B cell (primary cell): ENCODE measurements at regions of chr9 and their contacts with region 1.

Region 1: GRCh38 chr9:36407122-36407723 is 7.2 kb upstream of the RNF38 start:
- DNase-seq: peak; percentile 83
- ATAC-seq: peak; percentile 86
- H3K4me3 ChIP-seq: no peak overlapping the region
- H3K4me3 Mint-ChIP-seq: no peak overlapping the region
- H3K27ac ChIP-seq: peak overlapping the region in 1 of 2 donors; percentile 35
- H3K27ac Mint-ChIP-seq: peak overlapping the region; percentile 54
- H3K4me1 ChIP-seq: no peaks in the 10 kb centered on the region
- H3K4me1 Mint-ChIP-seq: peaks cover 9% of the 10 kb centered on the region
- H3K27me3 ChIP-seq: no peaks in the 10 kb centered on the region
- H3K27me3 Mint-ChIP-seq: no peaks in the 10 kb centered on the region
- CTCF ChIP-seq: peak; percentile 97

Region 2: GRCh38 chr9:36328798-36329411 is 78.3 kb before region 1 on chr9:
- CTCF ChIA-PET with region 1: no interaction called
- POLR2A ChIA-PET with region 1: no interaction called
- intact Hi-C with region 1: no loop called
- DNase-seq: peak; percentile 76
- ATAC-seq: peak; percentile 31
- H3K4me3 ChIP-seq: no peak overlapping the region
- H3K4me3 Mint-ChIP-seq: no peak overlapping the region
- H3K27ac ChIP-seq: no peak overlapping the region
- H3K27ac Mint-ChIP-seq: no peak overlapping the region
- H3K4me1 ChIP-seq: no peaks in the 10 kb centered on the region
- H3K4me1 Mint-ChIP-seq: peaks cover 2% of the 10 kb centered on the region
- H3K27me3 ChIP-seq: no peaks in the 10 kb centered on the region
- H3K27me3 Mint-ChIP-seq: no peaks in the 10 kb centered on the region
- CTCF ChIP-seq: peak; percentile 85

Region 3: GRCh38 chr9:36423206-36423605 is 16.0 kb after region 1 on chr9:
- CTCF ChIA-PET with region 1: interaction called, 27 read pairs
- POLR2A ChIA-PET with region 1: no interaction called
- intact Hi-C with region 1: no loop called
- DNase-seq: no peak
- ATAC-seq: no peak
- H3K4me3 ChIP-seq: no peak overlapping the region
- H3K4me3 Mint-ChIP-seq: no peak overlapping the region
- H3K27ac ChIP-seq: no peak overlapping the region
- H3K27ac Mint-ChIP-seq: no peak overlapping the region
- H3K4me1 ChIP-seq: no peaks in the 10 kb centered on the region
- H3K4me1 Mint-ChIP-seq: peaks cover 2% of the 10 kb centered on the region
- H3K27me3 ChIP-seq: no peaks in the 10 kb centered on the region
- H3K27me3 Mint-ChIP-seq: no peaks in the 10 kb centered on the region
- CTCF ChIP-seq: no peak

Region 4: GRCh38 chr9:36450110-36450732 is 43.0 kb after region 1 on chr9:
- CTCF ChIA-PET with region 1: interaction called, 28 read pairs
- POLR2A ChIA-PET with region 1: no interaction called
- intact Hi-C with region 1: loop called (anchors 1 kb)
- DNase-seq: peak; percentile 40
- ATAC-seq: no peak
- H3K4me3 ChIP-seq: no peak overlapping the region
- H3K4me3 Mint-ChIP-seq: no peak overlapping the region
- H3K27ac ChIP-seq: no peak overlapping the region
- H3K27ac Mint-ChIP-seq: no peak overlapping the region
- H3K4me1 ChIP-seq: no peaks in the 10 kb centered on the region
- H3K4me1 Mint-ChIP-seq: peaks cover 8% of the 10 kb centered on the region
- H3K27me3 ChIP-seq: no peaks in the 10 kb centered on the region
- H3K27me3 Mint-ChIP-seq: no peaks in the 10 kb centered on the region
- CTCF ChIP-seq: peak; percentile 75

Region 5: GRCh38 chr9:36470643-36471290 is 63.5 kb after region 1 on chr9:
- CTCF ChIA-PET with region 1: interaction called, 7 read pairs
- POLR2A ChIA-PET with region 1: no interaction called
- intact Hi-C with region 1: loop called (anchors 5 kb)
- DNase-seq: peak; percentile 79
- ATAC-seq: peak; percentile 96
- H3K4me3 ChIP-seq: peak overlapping the region; percentile 30 to 63 (median 48)
- H3K4me3 Mint-ChIP-seq: peak overlapping the region; percentile 83
- H3K27ac ChIP-seq: peak overlapping the region; percentile 85 to 95
- H3K27ac Mint-ChIP-seq: peak overlapping the region; percentile 87
- H3K4me1 ChIP-seq: peaks cover 19 to 24% of the 10 kb centered on the region in 2 donors
- H3K4me1 Mint-ChIP-seq: peaks cover 35% of the 10 kb centered on the region
- H3K27me3 ChIP-seq: no peaks in the 10 kb centered on the region
- H3K27me3 Mint-ChIP-seq: no peaks in the 10 kb centered on the region
- CTCF ChIP-seq: no peak

Region 6: DNA sequence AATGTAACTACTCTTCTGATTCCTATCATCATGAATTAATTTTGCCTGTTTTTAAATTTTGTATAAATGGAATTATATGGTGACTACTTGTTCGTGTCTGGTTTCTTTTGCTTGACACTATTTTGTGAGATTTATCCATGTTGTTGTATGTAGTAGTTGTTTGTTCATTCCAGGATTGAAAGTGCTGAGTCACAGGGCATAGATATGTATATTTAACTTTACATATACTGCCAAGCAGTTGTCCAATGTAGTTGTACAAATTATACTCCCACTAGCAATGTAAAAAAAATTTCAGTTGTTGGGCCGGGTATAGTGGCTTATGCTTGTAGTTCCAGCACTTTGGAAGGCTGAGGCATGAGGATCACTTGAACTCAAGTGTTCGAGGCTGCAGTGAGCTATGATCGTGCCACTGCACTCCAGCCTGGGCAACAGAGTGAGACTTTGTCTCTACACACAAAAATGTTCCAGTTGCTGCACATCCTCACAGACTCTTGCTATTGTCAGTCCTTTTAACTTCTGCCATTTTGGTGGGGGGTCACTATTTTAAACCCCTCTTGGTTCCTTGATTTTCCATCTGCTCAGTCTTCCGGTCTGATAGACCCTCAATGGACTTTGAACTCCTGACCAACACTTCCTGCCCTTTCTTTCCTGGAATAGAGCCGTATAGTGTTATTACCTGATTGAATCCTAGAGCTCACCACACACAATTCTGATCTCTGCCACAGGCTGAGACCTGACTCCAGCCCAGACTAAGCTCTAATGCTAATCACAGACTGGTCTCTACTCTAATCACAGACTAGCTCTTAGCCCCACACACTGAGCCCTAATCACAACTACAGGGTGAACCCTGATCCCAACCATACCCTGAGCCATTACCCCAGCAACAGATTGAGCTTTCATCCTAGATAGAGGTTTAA is 96.2 kb after region 1 on chr9:
- CTCF ChIA-PET with region 1: interaction called, 10 read pairs
- POLR2A ChIA-PET with region 1: no interaction called
- intact Hi-C with region 1: no loop called
- DNase-seq: no peak
- ATAC-seq: no peak
- H3K4me3 ChIP-seq: no peak overlapping the region
- H3K4me3 Mint-ChIP-seq: no peak overlapping the region
- H3K27ac ChIP-seq: no peak overlapping the region
- H3K27ac Mint-ChIP-seq: no peak overlapping the region
- H3K4me1 ChIP-seq: peaks cover 3 to 8% of the 10 kb centered on the region in 2 donors
- H3K4me1 Mint-ChIP-seq: peaks cover 24% of the 10 kb centered on the region
- H3K27me3 ChIP-seq: peaks cover 0 to 3% (median 0%) of the 10 kb centered on the region in 4 experiments
- H3K27me3 Mint-ChIP-seq: peaks cover 8% of the 10 kb centered on the region
- CTCF ChIP-seq: no peak

Region 7: GRCh38 chr9:36632892-36633291 is 225.7 kb after region 1 on chr9:
- CTCF ChIA-PET with region 1: interaction called, 3 read pairs
- POLR2A ChIA-PET with region 1: no interaction called
- intact Hi-C with region 1: loop called (anchors 1 kb)
- DNase-seq: peak; percentile 45
- ATAC-seq: no peak
- H3K4me3 ChIP-seq: no peak overlapping the region
- H3K4me3 Mint-ChIP-seq: no peak overlapping the region
- H3K27ac ChIP-seq: no peak overlapping the region
- H3K27ac Mint-ChIP-seq: no peak overlapping the region
- H3K4me1 ChIP-seq: no peaks in the 10 kb centered on the region
- H3K4me1 Mint-ChIP-seq: no peaks in the 10 kb centered on the region
- H3K27me3 ChIP-seq: no peaks in the 10 kb centered on the region
- H3K27me3 Mint-ChIP-seq: no peaks in the 10 kb centered on the region
- CTCF ChIP-seq: peak; percentile 75